ENCODE measurements at regions of chr19 and their contacts with region 1.

Region 1: GRCh38 chr19:6516659-6517291 is 14.1 kb upstream of the TNFSF9 start:
- DNase-seq: peak; percentile 85
- CTCF ChIP-seq: peak; percentile 98

Region 2: DNA sequence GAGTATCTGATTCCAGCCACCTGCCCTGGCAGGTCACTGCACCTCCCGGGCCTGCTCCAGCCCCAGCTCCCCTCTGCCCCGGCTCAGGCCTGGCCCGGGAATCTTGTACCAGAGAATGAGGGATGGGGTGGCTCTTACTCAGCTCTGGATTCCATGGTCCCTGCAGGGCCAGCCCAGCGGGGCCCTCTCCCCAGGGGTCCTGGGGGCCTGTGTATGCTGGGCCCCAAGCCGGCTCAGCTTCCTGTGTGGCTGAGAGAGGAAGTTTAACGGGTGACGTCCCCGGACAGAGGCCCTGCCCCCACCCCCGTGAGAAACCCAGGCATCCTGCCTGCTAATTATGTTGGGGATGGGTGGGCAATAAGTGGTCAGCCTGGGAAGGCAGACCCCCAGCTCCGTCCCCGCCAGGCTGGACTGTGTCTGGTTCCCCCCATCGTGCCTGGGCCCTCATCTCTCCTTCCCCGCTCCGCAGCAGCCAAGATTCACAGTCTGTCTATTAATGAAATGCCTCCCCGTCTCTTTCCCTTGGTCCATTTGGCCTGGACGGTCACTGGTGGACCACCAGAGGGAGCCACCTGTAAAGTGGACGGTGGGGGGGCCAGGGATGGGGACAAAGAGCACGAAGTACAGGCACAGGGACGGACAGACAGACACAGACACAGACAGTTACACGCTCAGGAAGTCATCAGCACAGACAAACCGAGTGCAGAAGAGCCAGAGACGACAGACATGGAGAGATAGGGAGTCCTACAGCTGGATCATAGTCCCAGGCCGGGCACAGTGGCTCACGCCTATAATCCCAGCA is 35.0 kb before region 1 on chr19 and contains the start of gene DENND1C:
- CTCF ChIA-PET with region 1: interaction called, 12 read pairs
- POLR2A ChIA-PET with region 1: interaction called, 3 read pairs
- DNase-seq: peak; percentile 80
- CTCF ChIP-seq: peak; percentile 88

Measured in GM10248 (cell line).